Posterior cingulate gyrus (tissue), 11 donors: ENCODE measurements at regions of chr9 and their contacts with region 1.

Region 1: GRCh38 chr9:34899535-34900158 is 58.4 kb upstream of the PHF24 start:
- DNase-seq: peak; percentile 70 to 97 (median 87)

Region 2: DNA sequence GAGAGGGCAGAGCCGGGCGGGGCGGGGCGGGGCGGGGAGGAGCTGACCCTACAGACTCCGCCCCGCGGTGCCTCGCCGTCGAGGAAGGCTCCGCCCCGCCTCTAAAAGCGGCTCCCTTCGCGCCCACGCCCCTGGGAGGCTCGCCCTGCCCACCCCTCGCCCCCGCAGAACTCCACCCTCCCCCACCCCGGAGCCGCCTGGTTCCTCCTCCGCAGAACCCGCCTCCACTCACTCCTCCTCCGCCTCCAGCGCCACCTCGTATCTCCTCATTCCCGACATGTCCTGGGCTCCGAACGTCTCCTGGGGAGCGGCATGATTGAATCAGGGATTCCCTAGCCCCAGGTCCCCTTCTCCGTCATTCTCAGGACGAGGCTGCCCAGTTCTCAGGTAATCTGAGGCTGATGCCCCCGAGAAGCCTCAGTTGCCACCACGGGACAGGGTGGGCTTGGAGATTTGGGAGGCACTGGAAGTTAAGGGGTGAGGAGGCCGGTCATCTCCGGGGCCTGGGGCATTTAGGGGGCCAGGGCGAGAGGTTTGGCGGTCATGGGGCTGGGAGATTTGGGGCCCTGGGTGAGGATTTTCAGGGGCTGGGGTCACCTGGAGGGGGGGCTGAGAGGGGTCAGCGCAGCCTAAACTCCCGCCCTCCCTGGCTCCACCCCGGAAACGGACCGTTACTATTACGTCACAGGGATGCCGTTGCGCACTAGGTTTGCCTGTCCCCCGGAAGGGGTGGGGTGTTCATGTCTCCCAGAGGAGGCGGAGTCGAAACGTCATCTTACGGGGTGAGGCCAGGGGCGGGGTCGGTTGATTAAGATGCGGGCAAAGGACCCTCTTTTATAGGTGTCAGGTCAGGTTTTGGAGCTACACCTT is 234.0 kb before region 1 on chr9:
- intact Hi-C with region 1: no loop called
- DNase-seq: peak; percentile 90 to 99 (median 96)

Region 3: GRCh38 chr9:34985311-34985899 is 85.8 kb after region 1 on chr9:
- intact Hi-C with region 1: loop called (anchors 1 kb)
- DNase-seq: peak in 7 of 10 donors; percentile 63 to 92 (median 74)

Region 4: GRCh38 chr9:35029852-35030251 is 130.2 kb after region 1 on chr9:
- intact Hi-C with region 1: no loop called
- DNase-seq: peak in 1 of 10 donors; percentile 36

Region 5: GRCh38 chr9:35096035-35096849 is 196.6 kb after region 1 on chr9 and contains the start of gene PIGO:
- intact Hi-C with region 1: loop called (anchors 1 kb)
- DNase-seq: peak; percentile 74 to 98 (median 88)